ENCODE measurements at regions of chr7 and their contacts with region 1.

Region 1: DNA sequence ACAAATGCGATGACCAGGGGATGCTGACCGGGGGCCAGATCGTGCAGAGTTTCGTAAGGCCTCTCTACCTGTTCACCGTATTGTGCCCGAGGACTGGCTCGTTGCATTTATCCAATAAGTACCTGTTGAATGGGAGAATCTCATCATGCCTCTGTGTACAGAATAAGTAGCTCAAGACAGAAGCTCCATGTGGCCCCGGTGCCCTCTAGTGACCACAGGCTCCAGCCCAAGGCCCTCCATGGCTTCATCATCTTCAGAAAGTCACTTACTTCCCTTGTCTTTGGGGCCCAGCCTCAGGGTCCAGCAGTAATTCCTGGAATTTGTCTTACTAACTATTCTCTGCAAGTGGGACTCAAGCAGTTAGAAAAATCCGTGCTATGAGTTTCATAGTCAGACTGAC is 151.0 kb downstream of the CHN2 start:
- DNase-seq: no peak
- ATAC-seq: no peak
- H3K4me3 Mint-ChIP-seq: no peak overlapping the region
- H3K27ac Mint-ChIP-seq: no peak overlapping the region
- H3K4me1 Mint-ChIP-seq: no peaks in the 10 kb centered on the region
- H3K27me3 Mint-ChIP-seq: peaks cover 1% of the 10 kb centered on the region
- CTCF ChIP-seq: no peak

Region 2: DNA sequence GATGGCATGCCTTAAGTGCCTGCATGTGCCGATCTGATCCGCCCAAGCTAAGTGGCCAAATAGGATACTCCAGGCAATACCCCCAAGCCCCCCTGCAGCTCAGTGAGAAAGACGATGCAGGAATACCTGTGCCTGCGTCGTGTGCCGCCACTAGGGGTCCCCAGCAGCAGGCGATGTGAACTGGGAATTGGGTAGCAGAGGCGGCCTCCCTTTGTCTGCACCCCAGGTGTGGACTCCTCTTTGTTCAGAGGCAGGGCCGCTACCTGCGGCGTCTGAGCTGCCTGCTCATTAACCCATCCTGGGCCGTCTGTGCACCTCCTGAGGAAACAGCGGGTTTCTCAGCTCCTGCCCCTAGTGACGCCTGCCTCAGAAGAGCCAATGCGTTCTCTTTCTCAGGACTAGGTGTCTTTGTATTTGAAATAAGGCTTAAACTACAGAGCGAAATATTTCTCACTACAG is 155.8 kb before region 1 on chr7:
- CTCF ChIA-PET with region 1: interaction called, 13 read pairs
- POLR2A ChIA-PET with region 1: no interaction called
- intact Hi-C with region 1: loop called (anchors 1 kb)
- DNase-seq: peak; percentile 24
- ATAC-seq: peak; percentile 56
- H3K4me3 Mint-ChIP-seq: no peak overlapping the region
- H3K27ac Mint-ChIP-seq: no peak overlapping the region
- H3K4me1 Mint-ChIP-seq: peaks cover 5% of the 10 kb centered on the region
- H3K27me3 Mint-ChIP-seq: peaks cover 38% of the 10 kb centered on the region
- CTCF ChIP-seq: no peak

Region 3: GRCh38 chr7:29248713-29249382 is 96.8 kb before region 1 on chr7:
- CTCF ChIA-PET with region 1: no interaction called
- POLR2A ChIA-PET with region 1: no interaction called
- intact Hi-C with region 1: no loop called
- DNase-seq: no peak
- ATAC-seq: no peak
- H3K4me3 Mint-ChIP-seq: no peak overlapping the region
- H3K27ac Mint-ChIP-seq: peak overlapping the region; percentile 7
- H3K4me1 Mint-ChIP-seq: peaks cover 21% of the 10 kb centered on the region
- H3K27me3 Mint-ChIP-seq: no peaks in the 10 kb centered on the region
- CTCF ChIP-seq: no peak